KBM-7 (cell line): ENCODE measurements at regions of chr20 and their contacts with region 1.

Region 1: GRCh38 chr20:53413186-53413631 is 180.4 kb downstream of the ZNF217 start:
- DNase-seq: peak; percentile 44

Region 2: DNA sequence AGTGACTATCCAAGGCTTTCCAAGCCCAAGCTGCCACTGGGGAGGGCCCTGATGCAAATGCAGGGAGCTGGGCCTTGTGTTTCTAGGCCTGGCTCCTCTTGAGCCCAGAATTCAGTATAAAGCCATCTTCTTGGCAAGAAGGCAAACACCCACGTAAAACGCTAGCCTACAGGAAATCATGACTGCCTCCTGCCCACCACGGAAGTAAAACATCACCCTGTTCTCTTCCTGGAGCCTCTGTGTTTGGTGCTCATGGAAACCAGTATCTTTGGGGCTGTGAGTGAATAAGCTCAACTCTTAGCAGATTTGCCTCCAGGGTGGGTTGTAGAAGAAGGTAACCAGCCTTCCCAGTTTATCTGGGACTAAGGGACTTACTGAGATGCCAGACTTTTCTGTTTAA is 90.6 kb before region 1 on chr20:
- in situ Hi-C with region 1: loop called (anchors 25 kb)
- DNase-seq: no peak

Region 3: DNA sequence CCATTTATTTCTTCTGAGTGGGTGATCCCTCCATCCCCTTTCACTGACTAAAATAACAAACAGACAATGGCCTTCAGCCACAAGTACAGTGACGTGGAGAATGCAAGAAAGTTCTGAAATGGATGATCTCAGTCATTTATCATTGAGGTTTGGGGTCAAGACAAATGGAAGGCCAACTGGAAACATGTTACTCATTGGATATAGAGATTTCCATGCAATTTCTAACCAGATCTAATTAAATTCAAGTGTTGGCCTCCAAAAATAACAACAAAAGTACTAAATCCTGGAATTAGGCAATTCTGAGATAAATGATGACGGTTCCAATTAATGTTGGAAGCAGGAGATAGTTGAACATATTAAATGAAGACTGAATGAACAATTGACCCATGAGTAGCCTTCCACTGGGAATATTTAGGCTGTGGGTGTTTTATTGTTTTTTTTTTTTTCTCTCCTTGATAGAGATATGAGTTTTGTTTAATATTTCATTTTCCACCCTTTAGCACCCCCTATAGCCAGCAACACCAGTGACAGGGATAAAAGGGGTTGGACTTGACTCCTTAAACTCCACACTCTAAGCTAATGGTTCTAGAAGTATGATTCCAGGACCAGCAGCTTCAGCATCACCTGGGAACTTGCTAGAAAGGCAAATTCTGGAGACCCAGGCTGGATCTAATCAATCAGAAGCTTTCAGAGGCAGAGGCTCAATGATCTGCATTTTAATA is 544.4 kb after region 1 on chr20:
- in situ Hi-C with region 1: loop called (anchors 25 kb)
- DNase-seq: peak; percentile 32